Heart left ventricle (tissue), 16 donors: ENCODE measurements at regions of chr3 and their contacts with region 1.

Region 1: GRCh38 chr3:194852825-194853537 is 167.3 kb downstream of the FAM43A start:
- DNase-seq: no peak
- ATAC-seq: no peak
- H3K4me3 ChIP-seq: no peak overlapping the region
- H3K27ac ChIP-seq: no peak overlapping the region
- H3K4me1 ChIP-seq: peaks cover 0 to 26% (median 16%) of the 10 kb centered on the region in 12 donors
- H3K27me3 ChIP-seq: no peaks in the 10 kb centered on the region
- CTCF ChIP-seq: no peak
- POLR2A ChIP-seq: no peak

Region 2: DNA sequence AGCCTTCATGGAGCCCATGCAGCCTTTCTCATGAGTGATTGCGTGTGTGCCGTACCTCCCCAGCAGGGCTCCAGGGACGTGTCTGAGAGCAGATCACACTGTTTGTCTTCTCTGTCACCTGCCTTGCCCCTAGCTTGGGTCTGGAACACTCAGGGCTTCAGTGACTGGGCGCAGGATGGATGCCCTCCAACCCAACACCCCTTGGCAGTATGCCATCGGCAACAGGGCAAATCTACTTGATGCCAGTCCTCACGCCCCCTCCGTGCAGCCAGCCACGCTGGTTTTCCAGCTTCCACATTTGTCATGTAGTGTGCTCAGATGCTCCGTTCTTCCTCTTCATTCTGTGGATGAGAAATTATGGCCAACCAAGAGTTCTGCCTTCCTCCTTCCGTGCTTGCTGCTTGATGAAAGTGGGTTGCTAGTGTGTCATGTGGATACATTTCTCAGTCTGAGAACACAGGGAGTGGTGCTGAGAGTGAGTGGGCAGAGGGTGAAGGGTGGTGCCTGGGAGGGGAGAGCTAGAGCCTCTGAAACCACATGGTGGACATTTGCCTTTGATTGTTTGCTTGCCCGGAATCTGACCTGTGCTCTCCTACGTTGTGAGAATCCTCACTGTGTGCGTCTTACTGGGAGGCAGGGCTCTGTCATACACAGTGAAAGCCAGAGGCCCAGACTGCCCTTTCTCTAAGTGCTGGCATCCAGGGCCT is 70.1 kb before region 1 on chr3:
- intact Hi-C with region 1: loop called in 1 of 10 experiments (anchors 5 kb)
- DNase-seq: no peak
- ATAC-seq: peak; percentile 34 to 61 (median 55)
- H3K4me3 ChIP-seq: no peak overlapping the region
- H3K27ac ChIP-seq: peak overlapping the region in 7 of 12 donors; percentile 2 to 72 (median 31)
- H3K4me1 ChIP-seq: peaks cover 0 to 37% (median 22%) of the 10 kb centered on the region in 12 donors
- H3K27me3 ChIP-seq: no peaks in the 10 kb centered on the region
- CTCF ChIP-seq: no peak
- POLR2A ChIP-seq: no peak